ENCODE measurements at regions of chr20 and their contacts with region 1.

Region 1: GRCh38 chr20:63223221-63224207 is 7.6 kb upstream of the YTHDF1 start:
- DNase-seq: peak; percentile 27
- H3K4me3 Mint-ChIP-seq: no peak overlapping the region
- H3K27ac Mint-ChIP-seq: no peak overlapping the region
- H3K4me1 Mint-ChIP-seq: no peaks in the 10 kb centered on the region
- H3K27me3 Mint-ChIP-seq: peaks cover 7% of the 10 kb centered on the region

Region 2: GRCh38 chr20:63206904-63207303 is 16.6 kb before region 1 on chr20:
- intact Hi-C with region 1: no loop called
- DNase-seq: no peak
- H3K4me3 Mint-ChIP-seq: no peak overlapping the region
- H3K27ac Mint-ChIP-seq: no peak overlapping the region
- H3K4me1 Mint-ChIP-seq: peaks cover 9% of the 10 kb centered on the region
- H3K27me3 Mint-ChIP-seq: no peaks in the 10 kb centered on the region

Region 3: DNA sequence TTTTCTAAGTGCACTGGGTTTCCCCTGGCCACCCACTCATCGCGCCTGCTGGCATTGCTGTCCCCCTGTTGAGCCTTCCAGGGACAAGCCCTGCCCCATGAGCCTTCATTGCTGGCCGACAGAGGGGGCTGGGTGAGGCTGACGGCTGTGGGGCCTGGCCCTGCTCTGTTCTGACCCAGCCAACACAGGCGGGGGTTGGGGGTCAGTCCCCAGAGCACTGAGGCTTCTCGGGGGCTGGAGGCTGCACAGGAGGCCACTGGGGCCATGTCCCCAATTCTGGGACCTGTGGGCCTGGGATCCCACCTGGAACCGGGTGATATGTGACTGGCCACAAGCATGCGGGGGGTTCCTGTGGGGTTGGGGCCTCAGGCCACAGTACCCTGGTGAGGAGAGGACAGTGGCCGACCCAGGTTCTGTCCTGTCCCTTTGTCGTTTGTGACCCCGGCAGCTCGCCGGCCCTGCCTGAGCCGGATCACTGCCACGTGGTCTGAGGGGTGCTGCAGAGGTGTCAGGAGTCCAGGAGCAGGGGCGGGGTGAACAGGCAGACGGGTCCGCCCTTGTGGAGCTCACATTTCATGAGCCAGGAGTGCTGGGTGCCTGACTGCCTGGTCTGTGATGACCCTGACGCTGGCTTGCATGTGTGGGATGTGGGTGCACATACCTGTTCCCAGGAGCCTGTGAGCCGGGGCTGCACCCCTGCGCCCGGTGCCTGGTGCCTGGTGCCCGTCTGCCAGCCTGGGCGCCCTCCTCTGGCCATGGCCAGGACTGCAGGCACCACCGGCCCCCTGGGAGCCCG is 67.4 kb after region 1 on chr20:
- intact Hi-C with region 1: loop called (anchors 2 kb)
- DNase-seq: peak; percentile 34
- H3K4me3 Mint-ChIP-seq: no peak overlapping the region
- H3K27ac Mint-ChIP-seq: no peak overlapping the region
- H3K4me1 Mint-ChIP-seq: no peaks in the 10 kb centered on the region
- H3K27me3 Mint-ChIP-seq: peaks cover 5% of the 10 kb centered on the region

Region 4: DNA sequence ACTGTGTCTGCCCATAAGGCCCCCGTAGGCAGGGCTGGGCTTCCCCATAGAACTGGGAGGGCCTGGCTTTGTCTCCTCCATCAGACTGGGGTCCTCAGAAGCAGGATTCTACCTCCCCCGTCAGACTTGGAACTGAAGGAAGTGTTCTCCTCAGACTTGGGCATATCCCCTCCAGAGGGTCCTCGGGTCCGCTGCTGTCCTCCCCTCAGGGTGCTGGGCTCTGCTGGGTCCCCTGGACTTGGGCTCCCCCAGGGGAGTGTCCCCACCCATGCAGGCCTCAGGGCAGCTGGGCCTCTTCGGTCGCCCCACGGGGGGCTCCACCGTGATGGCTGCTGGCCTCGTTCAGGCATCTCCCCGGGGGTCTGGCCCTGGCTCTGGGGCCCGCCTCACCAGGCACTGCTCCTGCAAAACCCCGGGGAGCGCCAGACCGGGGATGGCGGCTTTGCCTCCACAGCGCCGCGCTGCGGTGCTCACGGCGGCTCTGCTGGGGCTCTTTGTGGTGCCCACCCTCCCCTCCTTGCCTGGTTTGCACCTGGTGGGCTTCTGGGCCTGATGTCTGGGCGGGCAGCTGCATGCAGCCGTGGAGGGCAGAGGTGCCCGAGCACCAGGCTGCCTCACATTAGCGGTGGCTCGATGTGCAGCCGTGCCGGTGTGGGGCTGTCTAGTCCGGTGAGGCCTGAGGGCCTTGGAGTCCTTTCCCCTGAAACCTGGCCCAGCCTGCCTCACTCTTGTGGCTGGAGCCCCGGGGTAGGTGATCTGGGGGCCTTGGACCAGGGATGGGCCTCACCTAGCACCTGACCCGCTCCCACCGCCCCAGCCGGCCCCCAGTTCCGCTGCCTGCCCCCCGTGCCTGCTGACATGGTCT is 83.4 kb after region 1 on chr20:
- intact Hi-C with region 1: no loop called
- DNase-seq: no peak
- H3K4me3 Mint-ChIP-seq: no peak overlapping the region
- H3K27ac Mint-ChIP-seq: no peak overlapping the region
- H3K4me1 Mint-ChIP-seq: no peaks in the 10 kb centered on the region
- H3K27me3 Mint-ChIP-seq: peaks cover 1% of the 10 kb centered on the region

Region 5: DNA sequence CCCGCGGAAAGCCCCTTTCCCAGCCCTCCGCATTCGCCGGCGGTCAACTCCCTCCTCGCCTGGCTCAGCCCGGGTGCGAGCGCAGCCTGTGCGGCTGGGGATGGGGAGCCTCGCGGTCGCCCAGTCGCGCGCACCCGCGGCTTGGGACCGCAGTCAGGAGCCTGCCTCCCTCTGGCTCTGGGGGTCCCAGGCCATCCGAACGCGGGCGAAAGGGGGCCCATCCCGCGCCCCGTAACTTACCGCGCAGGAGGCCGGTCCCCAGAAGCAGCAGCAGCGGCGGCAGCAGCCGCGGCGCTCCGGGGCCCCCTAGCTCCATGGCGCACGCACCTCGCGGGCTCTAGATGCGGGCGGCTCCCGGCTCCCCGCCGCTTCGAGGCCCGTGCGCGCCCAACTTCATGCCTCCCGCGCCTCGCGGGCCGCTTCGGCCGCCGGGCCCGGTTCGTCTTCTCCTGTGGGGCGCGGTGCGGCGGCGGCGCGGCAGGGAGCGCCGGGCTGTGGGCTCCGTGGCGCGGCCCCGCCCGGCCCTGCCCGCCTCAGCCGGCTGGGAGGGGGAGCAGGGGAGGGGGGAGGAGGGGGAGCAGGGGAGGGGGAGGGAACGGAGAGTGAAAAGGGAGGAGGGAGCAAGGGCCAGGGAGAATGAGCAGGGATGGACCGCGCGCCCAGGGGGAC is 137.5 kb after region 1 on chr20 and contains the start of gene CHRNA4:
- intact Hi-C with region 1: no loop called
- DNase-seq: no peak
- H3K4me3 Mint-ChIP-seq: no peak within 1 kb of the TSS
- H3K27ac Mint-ChIP-seq: no peak within 1 kb of the TSS
- H3K4me1 Mint-ChIP-seq: no peaks in the 10 kb centered on the region
- H3K27me3 Mint-ChIP-seq: peaks cover 7% of the 10 kb centered on the region
- total RNA-seq, gene CHRNA4: not detected in 2 replicates